PC-3 (cell line): ENCODE measurements at regions of chr9 and their contacts with region 1.

Region 1: DNA sequence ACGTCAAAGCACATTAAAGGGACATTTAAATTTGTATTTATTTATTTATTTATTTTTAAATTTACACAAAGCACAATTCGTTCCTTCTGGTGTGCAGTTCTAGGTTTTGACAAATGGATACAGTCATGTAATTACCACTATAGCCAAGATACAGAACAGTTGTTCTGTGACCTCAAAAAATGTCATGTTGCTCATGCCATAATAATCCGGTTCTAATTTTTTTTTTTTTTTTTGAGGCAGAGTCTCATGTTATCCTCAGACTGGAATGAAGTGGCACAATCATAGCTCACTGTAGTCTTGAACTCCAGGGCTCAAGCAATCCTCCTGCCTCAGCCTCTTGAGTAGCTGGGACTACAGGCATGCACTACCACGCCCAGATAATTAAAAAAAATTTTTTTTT is 7.8 kb downstream of the IGFBPL1 start:
- DNase-seq: no peak
- ATAC-seq: no peak
- H3K4me3 ChIP-seq: no peak overlapping the region
- H3K27ac ChIP-seq: no peak overlapping the region
- H3K4me1 ChIP-seq: no peaks in the 10 kb centered on the region
- H3K27me3 ChIP-seq: 0 out of 2 replicates have a peak, but pooled peaks cover 4% of the 10 kb centered on the region
- CTCF ChIP-seq: no peak

Region 2: GRCh38 chr9:38644601-38645000 is 228.1 kb after region 1 on chr9:
- CTCF ChIA-PET with region 1: no interaction called
- POLR2A ChIA-PET with region 1: interaction called, 29 read pairs
- intact Hi-C with region 1: no loop called
- DNase-seq: peak; percentile 25
- ATAC-seq: no peak
- H3K4me3 ChIP-seq: no peak overlapping the region
- H3K27ac ChIP-seq: no peak overlapping the region
- H3K4me1 ChIP-seq: peaks cover 18% of the 10 kb centered on the region
- H3K27me3 ChIP-seq: no peaks in the 10 kb centered on the region
- CTCF ChIP-seq: no peak